CD4-positive, alpha-beta T cell (primary cell): ENCODE measurements at regions of chr6 and their contacts with region 1.

Region 1: GRCh38 chr6:42726485-42727086 is 4.2 kb upstream of the PRPH2 start:
- DNase-seq: peak; percentile 54 to 95 (median 66)
- ATAC-seq: peak; percentile 97
- H3K4me3 ChIP-seq: peak overlapping the region; percentile 54
- H3K4me3 Mint-ChIP-seq: peak overlapping the region; percentile 87
- H3K27ac ChIP-seq: peak overlapping the region; percentile 64 to 65
- H3K27ac Mint-ChIP-seq: peak overlapping the region; percentile 90
- H3K4me1 ChIP-seq: peaks cover 14% of the 10 kb centered on the region
- H3K4me1 Mint-ChIP-seq: peaks cover 19% of the 10 kb centered on the region
- H3K27me3 ChIP-seq: no peaks in the 10 kb centered on the region
- H3K27me3 Mint-ChIP-seq: no peaks in the 10 kb centered on the region
- CTCF ChIP-seq: peak; percentile 90

Region 2: DNA sequence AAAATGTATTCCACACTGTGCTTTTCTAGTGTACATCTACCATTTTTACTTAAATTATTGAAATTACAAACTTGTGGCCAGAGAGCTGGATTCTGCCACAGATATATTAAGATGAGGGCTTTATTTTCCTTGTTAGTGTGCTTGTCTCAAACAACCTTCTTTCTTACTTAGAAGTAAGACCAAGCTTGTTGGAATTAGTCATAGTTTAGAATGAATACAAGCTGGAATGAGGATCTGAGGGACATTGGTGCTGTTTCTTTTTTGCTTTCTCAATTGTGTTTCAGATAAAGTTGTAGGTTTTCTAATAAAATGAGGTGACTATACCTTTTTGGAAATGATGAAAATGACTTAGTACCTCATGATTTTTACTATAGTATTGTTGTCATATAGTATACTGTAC is 122.4 kb before region 1 on chr6:
- CTCF ChIA-PET with region 1: no interaction called
- POLR2A ChIA-PET with region 1: no interaction called
- intact Hi-C with region 1: no loop called
- DNase-seq: no peak
- ATAC-seq: no peak
- H3K4me3 ChIP-seq: no peak overlapping the region
- H3K4me3 Mint-ChIP-seq: no peak overlapping the region
- H3K27ac ChIP-seq: no peak overlapping the region
- H3K27ac Mint-ChIP-seq: no peak overlapping the region
- H3K4me1 ChIP-seq: no peaks in the 10 kb centered on the region
- H3K4me1 Mint-ChIP-seq: peaks cover 14% of the 10 kb centered on the region
- H3K27me3 ChIP-seq: no peaks in the 10 kb centered on the region
- H3K27me3 Mint-ChIP-seq: no peaks in the 10 kb centered on the region
- CTCF ChIP-seq: no peak

Region 3: DNA sequence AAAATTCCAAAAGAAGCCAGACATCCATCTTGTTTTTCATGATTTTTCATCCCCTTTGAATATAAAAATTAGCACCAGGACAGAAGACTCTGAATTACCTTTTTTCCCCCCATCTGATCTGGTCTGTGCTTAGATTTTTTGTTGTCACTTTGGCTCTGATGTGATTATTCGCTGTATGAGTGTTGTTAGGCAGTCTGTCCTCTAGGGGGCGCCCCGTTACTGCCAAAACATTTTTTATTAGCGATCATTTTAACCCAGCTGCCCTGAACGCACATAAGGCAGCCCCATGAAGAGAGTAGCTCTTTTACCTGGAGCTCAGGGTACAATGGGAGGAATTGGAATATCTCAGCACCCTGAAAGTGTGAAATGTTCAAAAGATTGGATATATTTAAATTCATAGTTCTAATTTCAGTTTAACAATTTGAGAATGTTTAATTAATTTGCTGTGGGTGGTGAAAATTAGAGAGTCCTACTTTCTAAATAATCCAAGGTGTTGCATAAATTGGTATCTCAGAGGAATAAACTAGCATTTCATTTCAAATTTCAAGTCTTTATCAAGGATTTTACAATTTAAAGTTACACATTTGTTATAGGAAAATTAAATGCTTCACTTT is 64.9 kb before region 1 on chr6:
- CTCF ChIA-PET with region 1: interaction called, 33 read pairs
- POLR2A ChIA-PET with region 1: interaction called, 13 read pairs
- intact Hi-C with region 1: loop called (anchors 1 kb)
- DNase-seq: peak; percentile 75 to 91 (median 85)
- ATAC-seq: peak; percentile 100
- H3K4me3 ChIP-seq: no peak overlapping the region
- H3K4me3 Mint-ChIP-seq: no peak overlapping the region
- H3K27ac ChIP-seq: no peak overlapping the region
- H3K27ac Mint-ChIP-seq: no peak overlapping the region
- H3K4me1 ChIP-seq: no peaks in the 10 kb centered on the region
- H3K4me1 Mint-ChIP-seq: no peaks in the 10 kb centered on the region
- H3K27me3 ChIP-seq: no peaks in the 10 kb centered on the region
- H3K27me3 Mint-ChIP-seq: no peaks in the 10 kb centered on the region
- CTCF ChIP-seq: peak; percentile 90

Region 4: GRCh38 chr6:42692137-42692911 is 34.3 kb before region 1 on chr6:
- CTCF ChIA-PET with region 1: interaction called, 3 read pairs
- POLR2A ChIA-PET with region 1: interaction called, 14 read pairs
- intact Hi-C with region 1: loop called in 1 of 2 experiments (anchors 2 kb)
- DNase-seq: no peak
- ATAC-seq: no peak
- H3K4me3 ChIP-seq: no peak overlapping the region
- H3K4me3 Mint-ChIP-seq: no peak overlapping the region
- H3K27ac ChIP-seq: peak overlapping the region in 1 of 2 donors; percentile 5
- H3K27ac Mint-ChIP-seq: peak overlapping the region; percentile 84
- H3K4me1 ChIP-seq: peaks cover 11% of the 10 kb centered on the region
- H3K4me1 Mint-ChIP-seq: peaks cover 39% of the 10 kb centered on the region
- H3K27me3 ChIP-seq: no peaks in the 10 kb centered on the region
- H3K27me3 Mint-ChIP-seq: no peaks in the 10 kb centered on the region
- CTCF ChIP-seq: no peak

Region 5: DNA sequence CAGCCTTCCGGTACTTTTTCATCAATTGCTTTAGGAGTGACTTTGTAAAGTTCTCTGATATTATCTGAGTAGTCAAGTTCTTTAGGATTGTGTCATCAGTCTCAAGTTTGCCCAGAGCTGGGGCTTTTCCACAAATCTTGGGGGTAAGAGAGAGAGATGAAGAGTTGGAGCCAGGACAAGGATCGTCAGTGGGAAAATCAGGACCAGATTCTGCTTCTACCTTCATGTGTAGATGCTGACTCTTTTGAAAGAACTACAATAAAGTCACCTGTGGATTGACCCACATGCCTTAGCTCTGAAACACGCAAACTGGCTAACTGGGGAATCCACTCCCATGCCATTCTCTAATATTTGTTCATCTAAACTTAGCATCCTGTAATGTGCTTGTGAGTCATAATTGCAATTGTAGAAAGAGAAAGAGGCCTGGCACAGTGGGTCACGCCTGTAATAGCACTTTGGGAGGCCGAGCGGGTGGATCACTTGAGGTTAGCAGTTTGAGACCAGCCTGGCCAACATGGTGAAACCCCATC is 39.6 kb after region 1 on chr6:
- CTCF ChIA-PET with region 1: interaction called, 22 read pairs
- POLR2A ChIA-PET with region 1: interaction called, 68 read pairs
- intact Hi-C with region 1: loop called (anchors 1 to 5 kb)
- DNase-seq: peak in 1 of 14 experiments; percentile 32
- ATAC-seq: no peak
- H3K4me3 ChIP-seq: no peak overlapping the region
- H3K4me3 Mint-ChIP-seq: no peak overlapping the region
- H3K27ac ChIP-seq: no peak overlapping the region
- H3K27ac Mint-ChIP-seq: peak overlapping the region; percentile 58
- H3K4me1 ChIP-seq: peaks cover 32% of the 10 kb centered on the region
- H3K4me1 Mint-ChIP-seq: peaks cover 58% of the 10 kb centered on the region
- H3K27me3 ChIP-seq: no peaks in the 10 kb centered on the region
- H3K27me3 Mint-ChIP-seq: no peaks in the 10 kb centered on the region
- CTCF ChIP-seq: no peak

Region 6: DNA sequence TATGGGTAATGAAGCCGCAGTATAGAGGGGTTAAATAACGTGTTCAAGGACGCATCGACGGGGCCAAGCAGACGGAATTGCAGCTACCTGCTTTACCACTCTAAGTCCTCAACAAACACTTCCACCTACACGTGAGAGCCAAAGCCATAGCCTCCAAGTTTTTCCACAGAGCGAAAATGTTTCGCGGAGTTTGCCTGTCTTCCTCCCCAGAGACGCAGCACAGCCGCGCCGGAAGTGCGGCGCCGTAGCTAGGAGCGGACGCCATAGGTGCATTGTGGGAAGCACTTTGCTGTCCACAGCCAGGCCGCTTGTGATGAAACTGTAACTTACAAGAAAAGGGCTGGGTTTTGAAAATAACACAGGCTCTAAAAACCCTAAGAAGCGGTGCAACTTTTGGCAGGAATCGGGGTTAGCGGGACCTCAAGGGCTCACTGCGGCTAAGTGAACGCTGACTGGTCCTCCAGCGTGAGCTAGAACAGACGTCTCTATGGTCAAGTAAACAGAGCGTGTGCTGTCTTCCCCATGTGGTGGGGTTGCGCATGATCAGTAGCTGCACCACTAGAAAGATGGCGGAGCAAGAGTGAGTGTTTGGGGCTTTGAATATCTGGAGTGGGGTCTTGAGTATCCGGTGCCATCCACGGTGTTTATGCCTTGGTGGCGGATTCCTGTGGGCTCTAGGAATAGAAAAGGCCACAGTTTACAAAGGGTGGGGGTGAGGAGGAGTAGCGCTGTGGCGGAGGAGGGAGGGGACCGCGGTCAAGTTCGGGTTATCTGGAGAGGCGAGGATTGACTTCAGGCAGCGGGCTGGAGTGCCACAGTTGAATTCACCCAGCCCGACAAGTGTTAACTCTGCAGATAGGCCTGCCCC is 153.0 kb after region 1 on chr6 and contains the start of gene RPL7L1:
- CTCF ChIA-PET with region 1: interaction called, 5 read pairs
- POLR2A ChIA-PET with region 1: interaction called, 27 read pairs
- intact Hi-C with region 1: loop called (anchors 1 to 2 kb)
- DNase-seq: peak; percentile 68 to 93 (median 79)
- ATAC-seq: peak; percentile 92
- H3K4me3 ChIP-seq: peak within 1 kb of the TSS; percentile 69
- H3K4me3 Mint-ChIP-seq: peak within 1 kb of the TSS; percentile 93
- H3K27ac ChIP-seq: peak within 1 kb of the TSS; percentile 94 to 95
- H3K27ac Mint-ChIP-seq: peak within 1 kb of the TSS; percentile 97
- H3K4me1 ChIP-seq: peaks cover 41% of the 10 kb centered on the region
- H3K4me1 Mint-ChIP-seq: peaks cover 23% of the 10 kb centered on the region
- H3K27me3 ChIP-seq: no peaks in the 10 kb centered on the region
- H3K27me3 Mint-ChIP-seq: no peaks in the 10 kb centered on the region
- CTCF ChIP-seq: no peak
- total RNA-seq, gene RPL7L1: 76.1 TPM

Region 7: GRCh38 chr6:43318011-43318410 is 591.4 kb after region 1 on chr6:
- CTCF ChIA-PET with region 1: no interaction called
- POLR2A ChIA-PET with region 1: no interaction called
- intact Hi-C with region 1: no loop called
- DNase-seq: no peak
- ATAC-seq: no peak
- H3K4me3 ChIP-seq: no peak overlapping the region
- H3K4me3 Mint-ChIP-seq: no peak overlapping the region
- H3K27ac ChIP-seq: no peak overlapping the region
- H3K27ac Mint-ChIP-seq: no peak overlapping the region
- H3K4me1 ChIP-seq: no peaks in the 10 kb centered on the region
- H3K4me1 Mint-ChIP-seq: no peaks in the 10 kb centered on the region
- H3K27me3 ChIP-seq: no peaks in the 10 kb centered on the region
- H3K27me3 Mint-ChIP-seq: no peaks in the 10 kb centered on the region
- CTCF ChIP-seq: no peak